Heart right ventricle (tissue), 16 donors: ENCODE measurements at regions of chr18 and their contacts with region 1.

Region 1: DNA sequence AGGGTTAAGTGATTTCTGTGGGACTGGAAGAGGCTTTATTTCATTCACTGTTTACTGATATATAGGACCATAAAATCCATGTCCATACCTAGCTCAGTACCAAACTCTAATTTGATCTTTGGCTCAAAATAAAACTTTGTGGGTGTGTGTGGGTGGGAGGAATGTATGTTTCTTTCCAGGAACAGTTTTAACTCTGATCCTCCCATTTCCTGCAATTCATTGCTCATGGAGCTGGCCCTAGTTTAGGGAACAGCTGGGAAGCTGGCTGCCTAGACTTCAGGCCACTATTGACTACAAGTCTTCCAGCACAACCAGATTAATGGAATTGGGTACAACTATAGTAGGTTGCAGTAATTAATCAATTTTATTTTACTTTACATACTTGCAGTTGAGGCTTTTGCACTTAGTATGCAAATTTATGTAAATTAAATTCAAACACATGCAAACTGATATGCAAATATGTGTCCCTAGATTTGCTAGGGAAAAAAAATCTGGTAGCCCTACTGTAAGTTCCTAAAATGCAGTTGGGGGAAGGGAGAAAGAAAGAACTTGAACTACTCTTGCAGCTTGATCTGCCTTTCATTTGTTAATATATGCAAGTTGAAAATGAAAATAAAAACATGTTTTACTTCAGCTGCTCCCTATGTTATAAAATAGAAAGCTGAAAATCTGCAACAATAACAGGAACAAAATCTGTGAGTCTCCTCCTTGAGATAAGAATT is 1070.3 kb upstream of the CELF4 start:
- DNase-seq: peak in 1 of 2 donors; percentile 19
- ATAC-seq: peak in 6 of 8 donors; percentile 34 to 85 (median 81)
- H3K4me3 ChIP-seq: no peak overlapping the region
- H3K27ac ChIP-seq: peak overlapping the region in 4 of 10 donors; percentile 22 to 49 (median 36)
- H3K4me1 ChIP-seq: peaks cover 0 to 47% (median 19%) of the 10 kb centered on the region in 9 donors
- H3K27me3 ChIP-seq: no peaks in the 10 kb centered on the region
- CTCF ChIP-seq: no peak

Region 2: GRCh38 chr18:38284972-38285371 is 350.9 kb before region 1 on chr18:
- intact Hi-C with region 1: no loop called
- DNase-seq: no peak
- ATAC-seq: peak in 4 of 8 donors; percentile 21 to 63 (median 40)
- H3K4me3 ChIP-seq: no peak overlapping the region
- H3K27ac ChIP-seq: peak overlapping the region in 1 of 10 donors; percentile 17
- H3K4me1 ChIP-seq: peaks cover 0 to 4% (median 0%) of the 10 kb centered on the region in 9 donors
- H3K27me3 ChIP-seq: no peaks in the 10 kb centered on the region
- CTCF ChIP-seq: no peak

Region 3: DNA sequence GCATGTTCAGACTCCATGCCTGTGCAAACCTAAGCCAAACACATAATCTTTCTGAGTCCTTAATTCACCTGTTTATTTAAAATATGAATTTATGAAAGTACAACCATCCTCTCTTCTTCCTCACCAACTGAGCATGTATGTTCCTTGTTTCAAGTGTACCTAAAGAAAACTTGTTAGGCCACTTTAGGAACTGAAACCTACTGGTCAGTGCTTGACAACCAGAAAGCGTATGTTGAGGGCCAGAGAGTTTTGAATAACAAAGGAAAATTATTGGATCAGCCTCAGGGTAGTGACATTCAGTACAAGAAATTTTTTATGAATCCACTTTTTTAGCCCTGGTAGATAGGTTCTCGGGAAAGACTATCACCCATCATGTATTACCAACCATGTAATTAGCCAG is 222.7 kb before region 1 on chr18:
- intact Hi-C with region 1: no loop called
- DNase-seq: no peak
- ATAC-seq: no peak
- H3K4me3 ChIP-seq: no peak overlapping the region
- H3K27ac ChIP-seq: no peak overlapping the region
- H3K4me1 ChIP-seq: no peaks in the 10 kb centered on the region
- H3K27me3 ChIP-seq: no peaks in the 10 kb centered on the region
- CTCF ChIP-seq: no peak

Region 4: DNA sequence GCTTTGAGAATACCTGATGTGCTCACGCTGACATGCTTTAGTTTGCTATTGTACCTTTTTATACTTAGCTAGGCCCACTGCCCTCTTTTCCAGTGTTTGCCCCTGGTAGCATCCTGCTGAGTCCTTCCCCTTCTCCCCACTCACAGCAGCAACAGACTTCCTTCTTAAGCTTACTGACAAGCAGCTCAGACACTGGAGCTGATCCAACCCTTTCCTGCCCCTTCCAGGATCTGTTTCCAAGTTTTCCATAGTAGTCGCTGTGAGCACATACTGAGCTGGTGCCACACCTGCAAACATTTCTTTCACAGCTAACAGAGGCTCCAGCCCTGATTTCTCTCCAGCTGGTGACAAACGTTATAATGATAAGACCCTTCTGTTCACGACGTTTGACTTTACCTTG is 78.9 kb before region 1 on chr18:
- intact Hi-C with region 1: loop called in 1 of 10 experiments (anchors 10 kb)
- DNase-seq: peak in 1 of 2 donors; percentile 8
- ATAC-seq: peak in 2 of 8 donors; percentile 24 to 42
- H3K4me3 ChIP-seq: no peak overlapping the region
- H3K27ac ChIP-seq: no peak overlapping the region
- H3K4me1 ChIP-seq: peaks cover 0 to 7% (median 0%) of the 10 kb centered on the region in 9 donors
- H3K27me3 ChIP-seq: no peaks in the 10 kb centered on the region
- CTCF ChIP-seq: no peak

Region 5: GRCh38 chr18:38579764-38580163 is 56.1 kb before region 1 on chr18:
- intact Hi-C with region 1: loop called in 1 of 10 experiments (anchors 10 kb)
- DNase-seq: no peak
- ATAC-seq: no peak
- H3K4me3 ChIP-seq: no peak overlapping the region
- H3K27ac ChIP-seq: no peak overlapping the region
- H3K4me1 ChIP-seq: peaks cover 0 to 11% (median 0%) of the 10 kb centered on the region in 9 donors
- H3K27me3 ChIP-seq: peaks cover 0 to 5% (median 0%) of the 10 kb centered on the region in 7 donors
- CTCF ChIP-seq: no peak